ENCODE measurements at regions of chr4 and their contacts with region 1.

Region 1: DNA sequence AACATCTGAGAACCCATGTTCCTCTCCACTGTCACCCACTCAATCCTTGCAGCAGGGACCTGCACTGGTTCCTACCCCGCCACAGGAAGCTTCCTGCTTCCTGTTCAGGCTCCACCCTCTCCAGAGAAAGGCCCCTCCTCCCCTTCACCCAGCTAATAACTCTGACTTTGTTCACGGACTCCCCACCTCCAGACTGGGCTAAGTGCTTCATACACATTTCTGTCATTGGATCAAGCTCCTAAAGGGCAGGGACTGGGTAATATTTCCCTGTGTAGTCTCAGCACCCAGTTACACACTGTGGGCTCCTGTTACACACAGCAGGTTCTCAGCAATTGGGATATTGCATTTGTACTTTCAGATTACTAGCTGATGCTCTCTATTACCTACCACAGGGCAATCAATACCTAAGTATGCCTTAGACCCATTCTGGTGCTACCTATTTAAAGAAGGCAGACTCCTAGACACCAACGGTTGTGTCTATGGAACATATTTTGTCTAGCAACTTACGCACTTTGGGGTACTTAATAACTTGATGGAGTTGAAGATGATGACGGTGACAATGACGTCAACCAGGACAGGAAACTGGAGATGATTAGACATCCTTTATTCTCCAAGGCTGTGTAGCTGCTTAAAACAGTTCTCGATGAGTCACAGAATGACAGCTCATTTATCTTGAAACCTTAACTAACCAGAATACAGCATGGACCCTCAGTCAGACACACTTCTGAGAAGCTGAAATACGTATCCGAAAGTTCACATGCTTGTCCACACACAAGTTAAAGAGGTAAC is 58.1 kb downstream of the MAML3 start:
- DNase-seq: peak; percentile 23 to 72
- ATAC-seq: peak; percentile 21 to 77 (median 60)
- H3K4me3 ChIP-seq: peak overlapping the region in 3 of 10 donors; percentile 14 to 27 (median 26)
- H3K27ac ChIP-seq: peak overlapping the region; percentile 27 to 92 (median 82)
- H3K4me1 ChIP-seq: peaks cover 15 to 100% (median 86%) of the 10 kb centered on the region in 9 donors
- H3K27me3 ChIP-seq: no peaks in the 10 kb centered on the region
- CTCF ChIP-seq: no peak

Region 2: GRCh38 chr4:139794158-139794954 is 301.5 kb before region 1 on chr4:
- intact Hi-C with region 1: no loop called
- DNase-seq: no peak
- ATAC-seq: peak in 1 of 8 donors; percentile 37
- H3K4me3 ChIP-seq: no peak overlapping the region
- H3K27ac ChIP-seq: no peak overlapping the region
- H3K4me1 ChIP-seq: peaks cover 0 to 44% (median 13%) of the 10 kb centered on the region in 9 donors
- H3K27me3 ChIP-seq: no peaks in the 10 kb centered on the region
- CTCF ChIP-seq: no peak

Region 3: GRCh38 chr4:140049024-140049848 is 46.7 kb before region 1 on chr4:
- intact Hi-C with region 1: loop called in 2 of 10 experiments (anchors 5 kb)
- DNase-seq: peak; percentile 15 to 56
- ATAC-seq: peak; percentile 60 to 90 (median 83)
- H3K4me3 ChIP-seq: peak overlapping the region in 9 of 10 donors; percentile 16 to 55 (median 49)
- H3K27ac ChIP-seq: peak overlapping the region in 9 of 10 donors; percentile 21 to 84 (median 66)
- H3K4me1 ChIP-seq: peaks cover 2 to 60% (median 46%) of the 10 kb centered on the region in 9 donors
- H3K27me3 ChIP-seq: no peaks in the 10 kb centered on the region
- CTCF ChIP-seq: peak in 4 of 9 donors; percentile 9 to 57 (median 50)

Region 4: GRCh38 chr4:140579278-140579677 is 483.4 kb after region 1 on chr4:
- intact Hi-C with region 1: no loop called
- DNase-seq: no peak
- ATAC-seq: no peak
- H3K4me3 ChIP-seq: no peak overlapping the region
- H3K27ac ChIP-seq: no peak overlapping the region
- H3K4me1 ChIP-seq: peaks cover 0 to 4% (median 0%) of the 10 kb centered on the region in 9 donors
- H3K27me3 ChIP-seq: peaks cover 0 to 57% (median 40%) of the 10 kb centered on the region in 7 donors
- CTCF ChIP-seq: no peak

Measured in heart right ventricle (tissue), 16 donors.